ENCODE measurements at regions of chr1 and their contacts with region 1.

Region 1: DNA sequence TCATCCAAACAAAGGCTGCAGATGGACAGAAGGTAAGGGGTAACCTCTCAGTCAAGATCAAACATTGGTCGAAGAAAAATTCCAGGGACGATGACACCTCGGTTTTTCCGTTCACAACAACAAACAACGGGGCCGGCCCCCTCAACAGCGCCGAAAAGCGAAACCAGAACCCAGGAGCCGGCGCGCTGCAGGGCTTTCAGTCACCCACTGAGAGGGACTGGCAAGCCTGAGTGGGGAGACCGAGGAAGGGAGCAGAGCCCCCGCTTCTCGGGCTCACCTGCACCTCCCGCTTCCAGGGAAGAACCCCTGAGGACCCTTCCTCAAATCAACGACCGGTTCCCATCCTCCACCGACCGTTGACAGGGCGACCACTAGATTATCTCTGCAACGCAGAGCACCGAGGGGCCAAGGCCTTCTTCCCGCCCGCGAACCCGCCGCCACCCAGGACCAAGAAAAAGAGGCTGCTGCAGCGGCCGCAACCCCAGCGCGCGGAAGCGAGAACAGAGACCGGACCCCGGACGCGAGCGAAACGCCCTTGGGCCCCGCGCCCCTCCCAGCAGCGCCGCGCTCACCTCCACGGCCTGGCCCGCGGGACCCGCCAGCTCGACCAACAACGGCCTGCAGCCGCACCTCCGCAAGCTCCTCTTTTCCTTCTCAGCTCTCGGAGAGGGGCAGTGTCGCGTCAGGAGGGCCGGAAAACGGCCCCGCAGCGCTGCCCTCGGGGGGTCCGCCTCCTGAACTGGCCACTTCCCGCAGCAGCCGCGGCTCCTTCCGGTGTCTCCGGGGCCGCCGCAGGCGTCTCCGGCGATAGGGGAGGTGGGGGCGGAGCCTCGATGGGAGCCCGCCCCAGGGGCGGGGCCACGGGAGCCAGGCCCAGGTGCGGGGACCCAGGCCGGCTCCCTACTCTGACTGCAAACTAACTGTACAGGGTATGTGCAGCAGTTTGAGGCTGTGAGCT is at the start of gene USP33:
- DNase-seq: peak; percentile 82 to 95 (median 92)
- ATAC-seq: peak; percentile 93
- H3K4me3 Mint-ChIP-seq: peak within 1 kb of the TSS; percentile 86 to 97 (median 92)
- H3K27ac Mint-ChIP-seq: peak within 1 kb of the TSS; percentile 82 to 97 (median 92)
- H3K4me1 Mint-ChIP-seq: peaks cover 24 to 50% (median 38%) of the 10 kb centered on the region in 4 donors
- H3K27me3 Mint-ChIP-seq: no peaks in the 10 kb centered on the region
- polyA plus RNA-seq, gene USP33: 35.3 to 37.6 (median 35.8) TPM

Region 2: DNA sequence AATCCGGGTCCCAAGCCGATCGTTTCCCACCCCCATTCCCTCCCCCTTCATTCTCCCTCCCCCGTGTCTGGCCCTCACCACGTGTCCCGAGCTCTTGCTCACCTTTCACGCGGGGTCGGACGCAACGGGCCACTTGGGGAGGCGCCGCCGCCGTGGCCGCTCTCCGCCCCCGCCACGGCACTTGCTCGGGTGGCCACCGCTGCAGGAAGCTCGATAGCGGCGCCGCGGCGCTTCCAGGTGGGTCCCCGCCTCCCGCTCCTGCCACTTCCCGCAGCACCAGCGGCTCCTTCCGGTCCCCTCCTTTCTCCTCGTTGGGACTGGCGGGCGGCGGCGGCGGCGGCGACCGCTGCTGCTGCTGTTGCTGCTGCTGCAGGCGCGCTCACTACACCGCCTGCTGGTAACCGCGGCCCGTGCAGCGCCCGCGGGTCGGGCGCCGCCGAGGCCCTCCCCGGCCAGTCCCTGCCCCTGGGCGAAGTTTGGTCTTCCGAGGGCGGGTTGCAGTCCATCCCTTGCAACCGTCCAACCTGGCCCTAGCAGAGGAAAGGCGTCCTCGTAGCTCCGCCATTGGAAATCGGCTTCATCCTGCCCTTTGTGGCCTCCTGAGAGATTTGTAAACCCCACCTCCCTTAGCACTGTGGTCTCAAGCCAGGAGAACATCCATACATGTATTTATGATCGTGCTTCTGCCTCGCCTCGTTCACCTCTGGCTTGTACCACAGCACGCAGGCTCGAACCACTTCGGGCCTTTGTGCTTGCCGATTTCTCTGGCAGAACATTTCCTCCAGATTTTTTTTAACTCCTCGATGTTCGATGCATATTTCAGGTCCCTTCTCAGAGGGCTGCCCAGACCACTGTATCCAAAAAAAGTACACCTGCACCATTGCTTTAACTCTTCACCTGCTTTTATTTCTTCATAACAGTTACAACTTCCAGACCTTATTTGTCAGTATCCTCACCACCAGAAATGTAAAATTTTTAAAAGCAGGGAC is 75.9 kb before region 1 on chr1:
- POLR2A ChIA-PET with region 1: interaction called, 10 read pairs
- DNase-seq: peak; percentile 88 to 95 (median 92)
- ATAC-seq: peak; percentile 72 to 74
- H3K4me3 Mint-ChIP-seq: peak overlapping the region; percentile 86 to 95 (median 90)
- H3K27ac Mint-ChIP-seq: peak overlapping the region; percentile 93 to 99 (median 97)
- H3K4me1 Mint-ChIP-seq: peaks cover 16 to 46% (median 40%) of the 10 kb centered on the region in 4 donors
- H3K27me3 Mint-ChIP-seq: no peaks in the 10 kb centered on the region